Activated B cell treated with CpG ODN at 0.5 μM for 24 hours (primary cell): ENCODE measurements at regions of chr5 and their contacts with region 1.

Region 1: DNA sequence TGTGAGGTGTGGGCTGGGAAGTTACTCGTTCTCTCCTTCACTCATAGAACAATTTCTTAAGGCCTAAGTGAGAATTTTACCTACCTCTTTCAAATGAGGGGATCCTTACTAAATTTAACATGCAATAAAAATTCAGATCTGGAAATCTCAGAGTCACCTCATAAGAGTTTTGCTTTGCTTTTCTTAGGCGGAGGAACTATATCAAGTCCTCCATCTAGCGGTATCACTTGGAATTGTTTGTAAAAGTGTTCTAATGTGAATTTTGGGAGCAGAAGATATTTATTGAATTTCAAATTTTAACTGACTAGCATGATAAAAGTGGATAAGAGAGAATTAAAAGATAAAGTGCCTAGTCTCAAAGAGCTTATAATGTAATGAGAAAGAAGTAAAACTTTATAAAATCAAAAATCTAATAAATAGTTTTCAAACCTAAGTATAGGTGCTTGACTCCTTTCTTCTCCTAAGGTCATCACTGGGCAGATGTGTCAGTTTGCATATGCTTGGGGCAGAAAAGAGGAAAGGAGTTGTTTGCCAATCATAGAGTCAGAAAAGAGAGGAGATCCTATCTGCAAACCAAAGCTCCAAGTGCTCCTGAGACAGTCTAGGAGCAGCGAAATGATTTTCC is 145.7 kb upstream of the DAB2 start:
- DNase-seq: no peak
- ATAC-seq: no peak
- H3K4me3 Mint-ChIP-seq: no peak overlapping the region
- H3K27ac Mint-ChIP-seq: no peak overlapping the region
- H3K4me1 Mint-ChIP-seq: no peaks in the 10 kb centered on the region
- H3K27me3 Mint-ChIP-seq: peaks cover 8% of the 10 kb centered on the region
- CTCF ChIP-seq: no peak

Region 2: DNA sequence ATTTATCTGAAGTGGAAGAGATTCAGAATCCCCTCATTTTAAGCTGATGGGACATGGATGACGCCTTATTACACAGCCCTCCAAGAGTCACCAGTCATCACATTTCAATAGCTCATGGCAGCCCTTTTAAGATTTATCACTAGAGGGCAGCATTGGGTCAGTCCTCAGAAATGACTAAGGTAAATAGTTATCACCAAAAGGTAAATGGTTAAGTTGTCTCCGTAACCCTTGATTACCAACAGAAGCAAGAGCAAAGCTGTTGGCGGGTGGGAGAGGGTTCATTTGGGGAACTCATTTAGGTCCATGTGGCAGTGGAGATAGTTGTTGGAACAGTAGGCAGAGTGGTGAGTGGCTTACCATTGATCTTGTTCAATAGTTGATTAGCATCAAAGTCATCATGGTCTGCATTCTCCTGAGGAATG is 194.2 kb before region 1 on chr5:
- CTCF ChIA-PET with region 1: interaction called, 9 read pairs
- POLR2A ChIA-PET with region 1: no interaction called
- intact Hi-C with region 1: loop called (anchors 1 kb)
- DNase-seq: no peak
- ATAC-seq: peak; percentile 45
- H3K4me3 Mint-ChIP-seq: no peak overlapping the region
- H3K27ac Mint-ChIP-seq: no peak overlapping the region
- H3K4me1 Mint-ChIP-seq: no peaks in the 10 kb centered on the region
- H3K27me3 Mint-ChIP-seq: no peaks in the 10 kb centered on the region
- CTCF ChIP-seq: no peak